ENCODE measurements at regions of chr10 and their contacts with region 1.

Region 1: DNA sequence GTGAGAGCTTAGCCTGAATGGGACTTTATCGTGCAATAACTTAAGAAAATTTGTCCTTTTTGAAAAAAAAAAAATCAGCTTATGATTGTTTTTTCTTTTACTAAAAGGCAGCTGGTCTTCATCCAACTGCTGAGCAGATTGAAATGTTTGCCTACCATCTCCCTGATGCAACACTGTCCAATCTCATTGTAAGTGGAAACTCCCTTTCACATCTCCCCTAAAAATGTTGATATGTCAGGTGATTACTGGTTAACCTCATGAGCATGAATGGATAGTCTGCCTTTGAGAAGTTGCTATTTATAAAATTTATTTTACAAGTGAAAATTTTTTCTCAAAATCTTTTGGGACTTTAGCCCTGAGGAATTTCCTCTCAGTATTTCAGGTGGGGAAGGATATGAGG is 17.8 kb upstream of the HKDC1 start:
- DNase-seq: peak in 4 of 5 donors; percentile 22 to 55 (median 37)
- H3K4me3 ChIP-seq: no peak overlapping the region
- H3K4me3 Mint-ChIP-seq: peak overlapping the region in 1 of 8 donors; percentile 35
- H3K27ac ChIP-seq: no peak overlapping the region
- H3K27ac Mint-ChIP-seq: peak overlapping the region in 5 of 7 donors; percentile 66 to 87 (median 81)
- H3K4me1 ChIP-seq: peaks cover 34% of the 10 kb centered on the region
- H3K4me1 Mint-ChIP-seq: peaks cover 5 to 41% (median 17%) of the 10 kb centered on the region in 4 donors
- H3K27me3 ChIP-seq: no peaks in the 10 kb centered on the region
- H3K27me3 Mint-ChIP-seq: no peaks in the 10 kb centered on the region

Region 2: GRCh38 chr10:69179743-69180524 is 22.4 kb before region 1 on chr10 and contains the start of gene SUPV3L1:
- CTCF ChIA-PET with region 1: interaction called, 4 read pairs
- POLR2A ChIA-PET with region 1: interaction called, 13 read pairs
- intact Hi-C with region 1: no loop called
- DNase-seq: peak; percentile 89 to 93 (median 91)
- H3K4me3 ChIP-seq: peak within 1 kb of the TSS; percentile 61 to 93
- H3K4me3 Mint-ChIP-seq: peak within 1 kb of the TSS; percentile 92 to 99 (median 98)
- H3K27ac ChIP-seq: peak within 1 kb of the TSS; percentile 94
- H3K27ac Mint-ChIP-seq: peak within 1 kb of the TSS; percentile 98 to 100 (median 100)
- H3K4me1 ChIP-seq: peaks cover 24% of the 10 kb centered on the region
- H3K4me1 Mint-ChIP-seq: peaks cover 31 to 51% (median 43%) of the 10 kb centered on the region in 4 donors
- H3K27me3 ChIP-seq: no peaks in the 10 kb centered on the region
- H3K27me3 Mint-ChIP-seq: no peaks in the 10 kb centered on the region
- total RNA-seq, gene SUPV3L1: 35.7 to 39.0 TPM

Region 3: DNA sequence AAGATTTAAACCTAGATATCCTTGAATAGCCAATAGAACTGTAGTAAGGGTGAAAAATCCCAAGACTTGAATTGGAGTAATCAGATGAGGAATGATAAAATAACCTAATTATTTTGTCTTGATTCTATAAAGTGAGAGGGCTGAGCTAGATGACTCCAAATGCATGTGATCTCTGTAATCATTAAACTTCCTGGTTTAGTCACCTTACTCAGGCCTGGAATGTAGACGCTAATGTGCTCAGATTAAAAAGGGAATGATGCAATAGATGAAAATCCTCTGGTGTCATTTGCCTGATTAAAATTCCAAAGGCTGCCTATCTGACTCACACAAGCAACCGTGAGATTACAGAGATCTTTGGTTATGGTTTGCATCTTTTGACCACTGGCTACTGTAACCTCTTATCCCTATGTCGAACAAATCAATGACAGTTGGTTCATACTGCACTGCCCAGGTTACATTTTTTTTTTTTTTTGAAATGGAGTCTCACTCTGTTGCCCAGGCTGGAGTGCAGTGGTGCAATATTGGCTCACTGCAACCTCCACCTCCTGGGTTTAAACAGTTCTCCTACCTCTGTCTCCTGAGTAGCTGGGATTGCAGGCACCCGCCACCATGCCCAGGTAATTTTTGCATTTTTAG is 14.9 kb after region 1 on chr10:
- CTCF ChIA-PET with region 1: interaction called, 36 read pairs
- POLR2A ChIA-PET with region 1: interaction called, 16 read pairs
- intact Hi-C with region 1: loop called (anchors 1 kb)
- DNase-seq: no peak
- H3K4me3 ChIP-seq: no peak overlapping the region
- H3K4me3 Mint-ChIP-seq: no peak overlapping the region
- H3K27ac ChIP-seq: no peak overlapping the region
- H3K27ac Mint-ChIP-seq: peak overlapping the region in 2 of 7 donors; percentile 43 to 80
- H3K4me1 ChIP-seq: peaks cover 32% of the 10 kb centered on the region
- H3K4me1 Mint-ChIP-seq: peaks cover 18 to 52% (median 26%) of the 10 kb centered on the region in 4 donors
- H3K27me3 ChIP-seq: no peaks in the 10 kb centered on the region
- H3K27me3 Mint-ChIP-seq: no peaks in the 10 kb centered on the region

Region 4: GRCh38 chr10:69222157-69223027 is 20.1 kb after region 1 on chr10:
- CTCF ChIA-PET with region 1: interaction called, 36 read pairs
- POLR2A ChIA-PET with region 1: interaction called, 8 read pairs
- intact Hi-C with region 1: loop called (anchors 1 kb)
- DNase-seq: peak; percentile 51 to 87 (median 54)
- H3K4me3 ChIP-seq: peak overlapping the region in 1 of 2 donors; percentile 42
- H3K4me3 Mint-ChIP-seq: peak overlapping the region; percentile 41 to 88 (median 76)
- H3K27ac ChIP-seq: peak overlapping the region; percentile 41
- H3K27ac Mint-ChIP-seq: peak overlapping the region; percentile 9 to 96 (median 78)
- H3K4me1 ChIP-seq: peaks cover 45% of the 10 kb centered on the region
- H3K4me1 Mint-ChIP-seq: peaks cover 18 to 46% (median 33%) of the 10 kb centered on the region in 4 donors
- H3K27me3 ChIP-seq: no peaks in the 10 kb centered on the region
- H3K27me3 Mint-ChIP-seq: no peaks in the 10 kb centered on the region

Region 5: GRCh38 chr10:69232252-69232651 is 29.9 kb after region 1 on chr10:
- CTCF ChIA-PET with region 1: no interaction called
- POLR2A ChIA-PET with region 1: interaction called, 15 read pairs
- intact Hi-C with region 1: no loop called
- DNase-seq: no peak
- H3K4me3 ChIP-seq: no peak overlapping the region
- H3K4me3 Mint-ChIP-seq: peak overlapping the region in 5 of 8 donors; percentile 12 to 94 (median 81)
- H3K27ac ChIP-seq: no peak overlapping the region
- H3K27ac Mint-ChIP-seq: peak overlapping the region in 6 of 7 donors; percentile 1 to 93 (median 78)
- H3K4me1 ChIP-seq: peaks cover 55% of the 10 kb centered on the region
- H3K4me1 Mint-ChIP-seq: peaks cover 41 to 71% (median 47%) of the 10 kb centered on the region in 4 donors
- H3K27me3 ChIP-seq: no peaks in the 10 kb centered on the region
- H3K27me3 Mint-ChIP-seq: no peaks in the 10 kb centered on the region

Measured in CD4-positive, alpha-beta memory T cell (primary cell).